Transverse colon (tissue), 4 donors: ENCODE measurements at regions of chr7 and their contacts with region 1.

Region 1: GRCh38 chr7:2555121-2556052 is at the start of gene BRAT1:
- DNase-seq: peak; percentile 98
- H3K4me3 ChIP-seq: peak within 1 kb of the TSS; percentile 69 to 93 (median 84)
- H3K27ac ChIP-seq: peak within 1 kb of the TSS; percentile 95 to 97 (median 96)
- H3K4me1 ChIP-seq: peaks cover 14 to 45% (median 35%) of the 10 kb centered on the region in 4 donors
- H3K27me3 ChIP-seq: no peaks in the 10 kb centered on the region
- CTCF ChIP-seq: peak; percentile 32 to 57 (median 43)
- EP300 ChIP-seq: no peak
- POLR2A ChIP-seq: peak; percentile 78
- total RNA-seq, gene BRAT1: 31.7 to 120 (median 40.4) TPM

Region 2: DNA sequence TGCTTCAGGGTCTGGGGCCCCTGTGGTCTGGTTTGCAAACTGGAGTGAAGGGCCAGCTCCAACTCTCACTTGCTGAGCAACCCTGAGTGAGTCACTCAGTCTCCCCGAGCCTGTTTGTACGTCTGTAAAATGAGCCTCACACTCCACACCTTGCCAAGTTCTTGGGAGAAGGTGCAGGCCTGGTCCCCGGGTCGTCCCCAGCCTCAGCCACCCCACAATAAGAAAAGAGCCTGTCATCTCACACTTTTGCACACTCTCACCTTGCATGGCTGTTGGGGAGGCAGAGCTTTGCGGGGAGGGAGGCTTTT is 84.4 kb before region 1 on chr7:
- in situ Hi-C with region 1: no loop called
- intact Hi-C with region 1: no loop called
- DNase-seq: no peak
- H3K4me3 ChIP-seq: no peak overlapping the region
- H3K27ac ChIP-seq: no peak overlapping the region
- H3K4me1 ChIP-seq: peaks cover 0 to 5% (median 0%) of the 10 kb centered on the region in 4 donors
- H3K27me3 ChIP-seq: peaks cover 20% of the 10 kb centered on the region
- CTCF ChIP-seq: no peak
- EP300 ChIP-seq: no peak
- POLR2A ChIP-seq: no peak

Region 3: DNA sequence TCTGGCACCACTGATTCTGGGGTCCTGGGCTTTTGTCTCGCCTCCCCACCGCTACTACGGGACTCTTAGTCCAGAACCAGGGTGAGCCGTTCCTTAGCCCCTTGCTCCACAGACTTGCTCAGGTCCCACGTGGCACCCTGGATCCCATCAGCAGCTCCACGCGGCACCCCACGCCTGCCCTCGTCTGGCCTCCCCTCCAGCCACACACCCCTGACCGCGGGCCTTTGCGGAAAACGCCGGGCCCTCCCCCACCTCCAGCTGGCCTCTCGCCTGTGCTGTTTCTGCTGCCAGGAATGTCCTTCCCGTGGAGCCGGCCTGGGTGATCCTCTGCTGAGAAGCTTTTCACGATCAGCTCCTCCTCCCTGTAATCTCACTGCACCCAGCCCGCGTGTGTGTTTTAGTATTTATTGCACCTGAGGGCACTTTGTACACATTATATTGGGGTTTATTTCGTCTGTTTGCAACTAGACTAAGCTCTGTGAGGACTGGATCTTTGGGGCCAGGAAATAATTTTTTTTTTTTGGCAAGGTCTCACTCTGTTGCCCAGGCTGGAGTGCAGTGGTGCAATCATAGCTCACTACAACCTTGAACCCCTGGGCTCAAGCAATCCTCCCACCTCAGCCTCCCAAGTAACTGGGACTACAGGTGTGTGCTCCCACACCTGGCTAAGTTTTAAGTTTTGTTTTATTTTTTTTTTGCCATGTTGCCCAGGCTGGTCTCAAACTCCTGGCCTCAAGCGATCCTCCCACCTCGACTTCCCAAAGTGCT is 65.9 kb after region 1 on chr7:
- in situ Hi-C with region 1: no loop called
- intact Hi-C with region 1: loop called (anchors 5 kb)
- DNase-seq: peak; percentile 53
- H3K4me3 ChIP-seq: no peak overlapping the region
- H3K27ac ChIP-seq: peak overlapping the region in 1 of 4 donors; percentile 3
- H3K4me1 ChIP-seq: peaks cover 27 to 43% (median 39%) of the 10 kb centered on the region in 4 donors
- H3K27me3 ChIP-seq: no peaks in the 10 kb centered on the region
- CTCF ChIP-seq: no peak
- EP300 ChIP-seq: no peak
- POLR2A ChIP-seq: no peak